ENCODE measurements at regions of chr13 and their contacts with region 1.

Region 1: DNA sequence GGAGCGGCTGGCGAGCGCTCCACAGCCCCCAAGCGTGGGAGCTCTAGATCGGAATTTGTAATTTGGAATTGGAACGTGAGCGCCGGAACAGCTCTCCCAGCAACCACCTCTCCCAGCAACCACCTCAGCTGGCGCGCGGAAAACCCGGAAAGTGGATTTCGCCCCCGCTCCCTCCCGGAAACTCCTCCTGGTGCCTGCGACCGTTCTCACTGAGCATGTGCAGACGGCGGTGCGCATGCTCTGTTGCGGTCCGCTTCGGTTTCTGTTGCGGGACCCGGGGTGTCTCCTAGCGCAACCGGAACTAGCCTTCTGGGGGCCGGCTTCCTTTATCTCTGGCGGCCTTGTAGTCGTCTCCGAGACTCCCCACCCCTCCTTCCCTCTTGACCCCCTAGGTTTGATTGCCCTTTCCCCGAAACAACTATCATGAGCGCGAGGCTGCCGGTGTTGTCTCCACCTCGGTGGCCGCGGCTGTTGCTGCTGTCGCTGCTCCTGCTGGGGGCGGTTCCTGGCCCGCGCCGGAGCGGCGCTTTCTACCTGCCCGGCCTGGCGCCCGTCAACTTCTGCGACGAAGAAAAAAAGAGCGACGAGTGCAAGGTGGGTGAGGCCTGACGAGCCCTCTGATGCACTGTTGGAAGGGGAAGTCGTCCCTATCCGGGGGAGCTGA is at the start of gene TM9SF2:
- DNase-seq: peak; percentile 94 to 97
- ATAC-seq: peak; percentile 76 to 83
- H3K4me3 ChIP-seq: peak within 1 kb of the TSS; percentile 74 to 99 (median 84)
- H3K27ac ChIP-seq: peak within 1 kb of the TSS; percentile 90 to 94 (median 92)
- H3K4me1 ChIP-seq: peaks cover 63 to 64% of the 10 kb centered on the region in 2 donors
- H3K27me3 ChIP-seq: no peaks in the 10 kb centered on the region
- CTCF ChIP-seq: peak in 1 of 5 experiments; percentile 12
- POLR2A ChIP-seq: peak; percentile 61 to 70
- total RNA-seq, gene TM9SF2: 47.3 to 69.9 (median 55.7) TPM

Region 2: DNA sequence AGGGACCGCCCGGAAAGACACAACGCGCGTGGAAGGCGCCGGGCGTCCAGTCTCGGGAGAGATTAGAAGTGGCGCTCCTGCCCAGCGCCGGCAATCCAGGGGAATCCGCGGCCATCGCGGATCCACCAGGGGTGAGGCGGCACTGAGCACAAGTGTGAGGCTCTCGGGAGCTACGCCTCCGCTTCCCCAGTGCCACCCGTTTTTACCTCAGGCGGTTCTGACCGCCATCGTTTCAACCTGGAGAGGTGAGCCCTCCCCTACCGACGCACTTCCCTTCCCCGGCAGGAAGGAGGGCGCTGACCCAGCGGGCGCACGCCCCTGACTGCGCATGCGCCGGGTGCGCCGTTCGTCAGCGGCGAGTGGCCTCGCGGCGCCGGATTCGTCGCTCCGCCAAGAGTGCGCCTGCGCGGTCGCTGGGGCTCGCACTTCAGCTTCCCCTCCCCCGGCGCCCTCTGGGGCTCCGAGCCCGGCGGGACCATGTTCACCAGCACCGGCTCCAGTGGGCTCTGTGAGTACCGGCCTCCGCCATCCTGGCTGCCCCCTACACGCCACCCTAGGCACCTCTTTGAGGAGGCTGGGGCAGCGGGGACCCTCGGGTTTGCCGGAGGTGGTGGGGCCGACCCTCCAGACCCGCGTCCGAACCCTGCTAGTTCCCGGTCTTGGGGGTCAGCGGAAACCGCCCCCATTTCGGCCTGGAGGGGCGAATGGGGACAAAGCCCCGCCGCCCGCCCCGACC is 300.7 kb before region 1 on chr13 and contains the start of gene UBAC2:
- in situ Hi-C with region 1: no loop called
- intact Hi-C with region 1: loop called (anchors 1 kb)
- DNase-seq: peak; percentile 89 to 94
- ATAC-seq: peak; percentile 89 to 91
- H3K4me3 ChIP-seq: peak within 1 kb of the TSS; percentile 87 to 100 (median 98)
- H3K27ac ChIP-seq: peak within 1 kb of the TSS; percentile 98 to 100 (median 100)
- H3K4me1 ChIP-seq: peaks cover 30 to 34% of the 10 kb centered on the region in 2 donors
- H3K27me3 ChIP-seq: no peaks in the 10 kb centered on the region
- CTCF ChIP-seq: no peak
- POLR2A ChIP-seq: peak; percentile 94
- total RNA-seq, gene UBAC2: 51.0 to 71.5 (median 61.1) TPM

Region 3: GRCh38 chr13:99436686-99437416 is 64.5 kb before region 1 on chr13:
- in situ Hi-C with region 1: loop called in 1 of 4 experiments (anchors 10 kb)
- intact Hi-C with region 1: loop called (anchors 1 kb)
- DNase-seq: peak; percentile 58 to 70
- ATAC-seq: peak; percentile 43 to 74
- H3K4me3 ChIP-seq: peak overlapping the region in 1 of 4 donors; percentile 1
- H3K27ac ChIP-seq: no peak overlapping the region
- H3K4me1 ChIP-seq: peaks cover 5 to 6% of the 10 kb centered on the region in 2 donors
- H3K27me3 ChIP-seq: no peaks in the 10 kb centered on the region
- CTCF ChIP-seq: peak; percentile 96 to 100 (median 99)
- POLR2A ChIP-seq: no peak

Region 4: GRCh38 chr13:99606324-99607066 is 105.2 kb after region 1 on chr13:
- in situ Hi-C with region 1: no loop called
- intact Hi-C with region 1: loop called (anchors 1 kb)
- DNase-seq: peak; percentile 85
- ATAC-seq: peak; percentile 89
- H3K4me3 ChIP-seq: peak within 1 kb of the TSS; percentile 70 to 91 (median 79)
- H3K27ac ChIP-seq: peak within 1 kb of the TSS; percentile 82 to 95 (median 88)
- H3K4me1 ChIP-seq: peaks cover 5 to 7% of the 10 kb centered on the region in 2 donors
- H3K27me3 ChIP-seq: no peaks in the 10 kb centered on the region
- CTCF ChIP-seq: no peak
- POLR2A ChIP-seq: peak; percentile 73 to 77

Region 5: DNA sequence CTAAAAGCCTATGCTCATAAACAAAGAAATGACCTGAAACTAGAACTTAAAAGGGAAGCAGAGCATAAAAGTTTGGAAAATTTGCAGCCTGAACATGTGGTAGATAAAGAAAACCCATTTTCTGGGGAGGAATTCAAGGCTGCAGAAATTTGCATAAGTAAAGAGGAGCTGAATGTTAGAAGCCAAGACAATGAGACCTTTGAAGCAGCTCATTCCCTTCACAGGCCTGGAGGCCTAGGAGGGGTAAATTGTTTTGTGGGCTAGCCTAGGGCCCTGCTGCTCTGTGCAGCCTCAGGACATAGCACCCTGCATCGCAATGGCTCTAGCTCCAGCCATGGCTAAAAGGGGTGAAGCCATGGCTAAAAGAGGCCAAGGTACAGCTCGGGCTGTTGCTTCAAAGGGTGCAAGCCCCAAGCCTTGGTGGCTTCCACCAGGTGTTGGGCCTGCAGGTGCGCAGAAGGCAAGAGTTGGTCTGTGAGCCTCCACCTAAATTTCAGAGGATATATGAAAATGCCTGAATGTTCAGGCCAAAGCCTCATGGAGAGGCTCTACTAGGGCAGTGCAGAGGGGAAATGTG is 518.6 kb after region 1 on chr13:
- in situ Hi-C with region 1: no loop called
- intact Hi-C with region 1: no loop called
- DNase-seq: no peak
- ATAC-seq: no peak
- H3K4me3 ChIP-seq: no peak overlapping the region
- H3K27ac ChIP-seq: no peak overlapping the region
- H3K4me1 ChIP-seq: no peaks in the 10 kb centered on the region
- H3K27me3 ChIP-seq: no peaks in the 10 kb centered on the region
- CTCF ChIP-seq: no peak
- POLR2A ChIP-seq: no peak

Measured in gastrocnemius medialis (tissue), 4 donors.